ENCODE measurements at regions of chr9 and their contacts with region 1.

Region 1: DNA sequence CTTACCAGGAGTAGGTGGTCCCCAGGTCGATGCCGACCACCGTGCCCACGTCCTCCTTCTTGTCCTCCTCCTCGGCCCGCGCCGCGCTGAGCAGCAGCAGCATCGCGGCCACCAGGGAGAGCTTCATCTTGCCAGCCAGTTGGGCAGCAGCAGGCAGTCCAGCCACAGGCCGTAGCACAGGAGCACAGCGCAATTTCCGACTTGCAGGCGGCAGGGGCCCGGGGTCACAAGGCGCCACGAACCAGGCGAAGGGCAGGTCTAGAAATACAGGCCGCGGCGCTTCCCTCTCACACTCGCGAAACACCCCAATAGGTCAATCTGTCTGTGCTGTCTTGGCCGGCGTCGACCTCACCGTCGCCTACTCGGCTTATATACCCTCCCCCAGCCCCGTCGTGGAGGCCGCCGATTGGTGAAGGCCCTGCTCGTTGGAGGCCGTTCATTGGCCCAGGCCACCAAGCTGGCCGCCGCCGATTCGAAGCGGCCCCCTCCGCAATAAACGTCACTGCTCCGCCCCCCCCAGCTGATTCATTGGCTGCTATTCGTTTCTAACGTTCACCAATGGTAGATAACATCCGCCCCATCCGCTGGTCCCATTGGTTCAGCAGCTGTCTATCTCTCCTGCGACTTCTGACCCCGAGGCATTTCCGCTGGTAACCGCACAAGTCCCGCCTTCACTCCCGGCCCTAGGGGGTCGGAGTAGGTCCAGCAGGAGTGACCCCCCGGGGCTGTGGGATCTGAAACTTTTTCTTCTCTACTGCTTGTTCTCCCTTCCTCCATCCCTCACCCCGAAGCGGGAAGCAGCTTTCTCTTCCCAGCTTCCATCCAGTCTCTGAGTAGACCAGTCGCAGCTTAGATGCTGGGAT is at the start of gene HSPA5:
- DNase-seq: peak; percentile 100
- H3K4me3 Mint-ChIP-seq: peak within 1 kb of the TSS; percentile 96
- H3K27ac Mint-ChIP-seq: peak within 1 kb of the TSS; percentile 99
- H3K4me1 Mint-ChIP-seq: peaks cover 37% of the 10 kb centered on the region
- H3K27me3 Mint-ChIP-seq: no peaks in the 10 kb centered on the region
- total RNA-seq, gene HSPA5: 124 to 127 TPM

Region 2: GRCh38 chr9:124631326-124631725 is 609.9 kb before region 1 on chr9:
- CTCF ChIA-PET with region 1: no interaction called
- POLR2A ChIA-PET with region 1: interaction called, 12 read pairs
- DNase-seq: no peak
- H3K4me3 Mint-ChIP-seq: no peak overlapping the region
- H3K27ac Mint-ChIP-seq: no peak overlapping the region
- H3K4me1 Mint-ChIP-seq: no peaks in the 10 kb centered on the region
- H3K27me3 Mint-ChIP-seq: peaks cover 15% of the 10 kb centered on the region

Region 3: GRCh38 chr9:125218621-125219020 is 22.6 kb before region 1 on chr9:
- CTCF ChIA-PET with region 1: no interaction called
- POLR2A ChIA-PET with region 1: no interaction called
- DNase-seq: no peak
- H3K4me3 Mint-ChIP-seq: no peak overlapping the region
- H3K27ac Mint-ChIP-seq: no peak overlapping the region
- H3K4me1 Mint-ChIP-seq: no peaks in the 10 kb centered on the region
- H3K27me3 Mint-ChIP-seq: no peaks in the 10 kb centered on the region

Region 4: DNA sequence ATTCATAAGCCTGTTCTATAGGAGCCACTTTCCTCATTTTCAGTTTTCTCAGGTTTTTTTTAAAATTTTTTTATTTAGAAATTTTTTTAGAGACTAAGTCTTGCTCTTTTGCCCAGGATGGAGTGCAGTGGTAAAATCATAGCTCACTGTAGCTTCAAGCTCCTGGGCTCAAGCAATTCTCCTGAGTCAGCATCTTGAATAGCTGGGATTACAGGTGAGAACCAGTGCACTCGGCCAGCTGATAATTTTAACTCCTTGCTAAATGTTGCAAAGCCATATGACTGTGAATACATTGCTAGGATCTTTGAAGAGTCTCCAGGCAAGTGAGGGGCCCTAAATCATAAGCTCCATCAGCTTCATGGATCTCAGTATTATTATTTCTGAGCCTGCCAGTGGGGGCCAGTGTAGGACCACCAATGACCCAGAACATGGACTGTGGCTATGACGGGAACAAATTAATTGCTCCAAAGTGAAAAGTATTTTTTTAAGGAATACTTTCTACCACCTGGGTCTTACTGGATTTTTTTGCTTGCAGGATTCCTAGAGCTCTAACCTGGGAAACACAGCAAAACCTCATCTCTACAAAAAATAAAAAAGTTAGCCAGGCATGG is 14.7 kb after region 1 on chr9:
- CTCF ChIA-PET with region 1: interaction called, 14 read pairs
- POLR2A ChIA-PET with region 1: interaction called, 13 read pairs
- DNase-seq: no peak
- H3K4me3 Mint-ChIP-seq: no peak overlapping the region
- H3K27ac Mint-ChIP-seq: no peak overlapping the region
- H3K4me1 Mint-ChIP-seq: peaks cover 2% of the 10 kb centered on the region
- H3K27me3 Mint-ChIP-seq: peaks cover 2% of the 10 kb centered on the region

Region 5: GRCh38 chr9:125261501-125262293 is 20.5 kb after region 1 on chr9 and contains the start of gene GAPVD1:
- CTCF ChIA-PET with region 1: interaction called, 14 read pairs
- POLR2A ChIA-PET with region 1: interaction called, 13 read pairs
- DNase-seq: peak; percentile 88
- H3K4me3 Mint-ChIP-seq: peak within 1 kb of the TSS; percentile 98
- H3K27ac Mint-ChIP-seq: peak within 1 kb of the TSS; percentile 97
- H3K4me1 Mint-ChIP-seq: peaks cover 38% of the 10 kb centered on the region
- H3K27me3 Mint-ChIP-seq: peaks cover 2% of the 10 kb centered on the region
- total RNA-seq, gene GAPVD1: 49.7 to 53.6 TPM

Region 6: DNA sequence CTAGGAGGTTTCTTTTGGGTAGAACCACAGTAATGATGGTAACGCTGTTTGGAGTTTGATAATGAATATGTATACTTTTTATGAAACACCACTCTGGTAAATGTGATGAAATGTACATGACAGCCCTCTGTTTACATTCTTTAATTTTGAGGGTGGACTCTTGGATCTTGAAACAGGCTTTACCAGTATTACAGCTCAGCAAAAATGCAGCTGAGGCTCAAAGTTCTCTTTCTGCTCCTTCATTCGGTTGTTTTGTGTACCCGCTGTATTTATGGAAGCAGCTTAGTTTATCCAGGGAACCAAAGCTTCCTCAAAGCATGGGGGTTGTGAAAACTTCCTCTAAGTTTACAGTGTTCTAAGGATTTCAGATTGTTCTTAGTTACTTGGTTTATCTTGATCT is 31.5 kb after region 1 on chr9:
- CTCF ChIA-PET with region 1: no interaction called
- POLR2A ChIA-PET with region 1: no interaction called
- DNase-seq: no peak
- H3K4me3 Mint-ChIP-seq: no peak overlapping the region
- H3K27ac Mint-ChIP-seq: no peak overlapping the region
- H3K4me1 Mint-ChIP-seq: peaks cover 14% of the 10 kb centered on the region
- H3K27me3 Mint-ChIP-seq: no peaks in the 10 kb centered on the region

Region 7: GRCh38 chr9:125393426-125393825 is 152.2 kb after region 1 on chr9:
- CTCF ChIA-PET with region 1: no interaction called
- POLR2A ChIA-PET with region 1: no interaction called
- DNase-seq: no peak
- H3K4me3 Mint-ChIP-seq: no peak overlapping the region
- H3K27ac Mint-ChIP-seq: no peak overlapping the region
- H3K4me1 Mint-ChIP-seq: no peaks in the 10 kb centered on the region
- H3K27me3 Mint-ChIP-seq: no peaks in the 10 kb centered on the region

Measured in activated CD4-positive, alpha-beta T cell treated with anti-CD3 and anti-CD28 coated beads, Interleukin-2, amount 10 ng/mL, durations not matched to agents 7 days and 5 days (primary cell).